ENCODE measurements at regions of chr5 and their contacts with region 1.

Region 1: DNA sequence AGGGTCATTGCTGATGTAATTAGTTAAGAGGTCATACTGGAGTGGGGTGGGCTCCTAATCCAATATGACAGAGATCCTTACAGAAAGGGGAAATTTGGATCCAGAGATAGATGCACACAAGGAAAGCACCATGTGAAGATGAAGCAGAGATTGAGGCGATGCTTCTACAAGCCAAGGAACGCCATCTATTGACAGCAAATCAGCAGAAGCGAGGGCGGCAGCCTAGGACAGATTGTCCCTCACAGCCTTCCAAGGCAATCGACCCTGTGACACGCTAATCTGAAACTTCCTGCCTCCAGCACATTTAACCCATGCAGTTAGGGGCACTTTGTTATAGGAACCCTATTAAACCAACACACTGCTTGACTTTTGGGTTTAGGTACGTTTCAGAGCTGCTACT is 285.1 kb upstream of the DAP start:
- DNase-seq: peak; percentile 23
- ATAC-seq: peak; percentile 61 to 62

Region 2: DNA sequence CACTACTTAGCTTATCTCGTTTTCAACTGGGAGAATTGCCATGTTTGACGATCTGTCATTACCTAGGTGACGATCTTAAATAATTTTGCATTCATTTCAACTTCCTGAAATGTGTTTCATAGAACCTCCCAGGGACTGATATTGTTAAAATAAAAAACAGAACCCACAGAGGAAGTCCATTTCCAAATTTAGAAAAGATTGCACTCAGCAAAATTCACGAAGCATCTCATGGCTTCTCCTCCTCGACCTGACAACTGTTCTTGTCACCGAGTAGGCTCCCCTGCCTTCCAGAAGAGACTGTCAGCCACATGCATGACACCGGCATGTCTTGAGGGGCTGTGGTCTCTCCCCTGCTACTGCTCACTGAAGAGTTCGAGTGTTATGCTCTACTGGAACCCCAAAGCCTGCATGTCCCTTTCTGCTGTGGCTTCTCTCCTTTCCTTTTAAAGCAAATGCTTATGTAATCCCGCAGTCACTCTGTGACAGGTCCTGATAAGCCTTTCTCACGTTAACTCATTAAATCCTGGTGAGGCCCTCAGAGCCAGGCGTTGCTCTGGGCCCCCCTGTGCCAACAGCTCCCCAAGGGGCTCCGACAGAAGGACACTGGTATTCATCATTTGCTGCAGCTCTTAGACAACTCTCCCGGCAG is 509.1 kb before region 1 on chr5:
- intact Hi-C with region 1: no loop called
- DNase-seq: no peak
- ATAC-seq: no peak

Region 3: DNA sequence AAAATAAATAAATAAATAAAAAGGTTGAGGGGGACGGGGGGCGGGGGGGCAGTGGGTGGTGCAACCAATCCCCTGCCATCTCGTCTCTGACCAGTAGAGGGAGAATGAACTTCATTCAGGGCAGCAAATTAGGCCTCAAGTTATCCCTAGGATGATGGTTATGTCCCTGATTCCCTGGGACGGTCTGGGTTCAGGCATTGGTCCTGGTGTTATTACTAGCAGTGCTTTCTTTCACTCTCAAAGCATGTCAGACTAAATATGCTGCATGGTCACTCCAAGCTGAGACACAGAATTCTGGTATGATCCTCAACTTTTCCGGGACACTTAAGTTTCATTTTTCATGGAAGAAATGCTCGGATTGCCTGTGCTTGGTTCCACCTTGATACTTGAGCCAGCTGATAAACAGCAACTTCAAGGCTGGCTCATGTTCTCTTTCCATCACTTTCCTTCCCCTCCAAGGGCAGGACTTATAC is 344.6 kb before region 1 on chr5:
- intact Hi-C with region 1: loop called in 1 of 2 experiments (anchors 5 kb)
- DNase-seq: no peak
- ATAC-seq: peak; percentile 32 to 39

Region 4: GRCh38 chr5:10863763-10864383 is 182.3 kb before region 1 on chr5:
- intact Hi-C with region 1: loop called in 1 of 2 experiments (anchors 10 kb)
- DNase-seq: peak; percentile 53
- ATAC-seq: peak; percentile 61 to 73

Region 5: DNA sequence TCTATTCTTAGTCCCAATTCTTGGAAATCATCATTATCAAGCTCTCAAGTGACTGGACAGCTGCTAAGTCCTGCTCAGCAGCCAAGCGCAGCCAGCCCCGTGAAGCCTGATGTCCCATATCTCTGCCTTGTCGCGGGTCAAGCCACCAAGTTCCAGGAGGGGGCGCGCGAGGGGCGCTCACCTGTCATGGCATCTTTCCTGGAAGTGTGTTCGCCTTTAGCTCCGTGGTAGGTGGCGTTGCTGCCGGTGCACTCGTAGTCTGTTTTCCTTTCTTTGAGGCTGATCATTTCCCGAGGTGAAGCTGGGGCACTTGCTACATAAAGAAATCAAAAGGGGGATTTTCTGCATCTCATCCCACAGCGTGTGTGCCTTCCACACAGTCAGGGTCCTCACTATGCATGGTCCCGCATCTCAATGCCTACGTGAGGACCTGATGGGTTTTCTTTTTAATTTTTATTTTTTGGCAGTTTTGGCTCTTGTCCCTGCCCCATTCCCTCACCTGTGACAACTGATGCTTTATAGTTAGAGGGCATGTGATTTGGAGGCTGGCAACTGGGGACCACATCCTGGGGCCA is 58.1 kb before region 1 on chr5:
- intact Hi-C with region 1: loop called in 1 of 2 experiments (anchors 5 kb)
- DNase-seq: peak; percentile 66
- ATAC-seq: peak; percentile 86 to 88

Region 6: DNA sequence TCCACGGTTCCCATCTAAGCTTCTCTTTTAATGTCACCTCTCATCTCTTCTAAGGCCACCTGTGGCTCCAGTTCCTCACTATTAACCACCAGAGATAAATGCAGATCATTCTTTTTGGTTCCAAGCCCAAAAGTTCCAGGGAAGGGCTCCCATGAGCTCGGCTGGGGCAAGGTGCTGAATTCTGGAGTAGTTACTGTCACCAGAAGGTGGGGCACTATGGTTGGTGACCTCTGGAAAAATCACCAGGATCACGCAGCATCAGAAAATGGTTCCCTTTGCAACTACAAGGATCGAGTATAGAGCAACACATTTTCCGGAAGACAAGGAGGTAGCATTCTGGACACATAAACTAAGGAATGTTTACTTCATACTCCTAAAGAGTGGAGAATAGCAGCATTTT is 243.6 kb after region 1 on chr5:
- intact Hi-C with region 1: no loop called
- DNase-seq: no peak
- ATAC-seq: no peak

Measured in left cardiac atrium (tissue), 4 donors.